ENCODE measurements at regions of chr15 and their contacts with region 1.

Region 1: DNA sequence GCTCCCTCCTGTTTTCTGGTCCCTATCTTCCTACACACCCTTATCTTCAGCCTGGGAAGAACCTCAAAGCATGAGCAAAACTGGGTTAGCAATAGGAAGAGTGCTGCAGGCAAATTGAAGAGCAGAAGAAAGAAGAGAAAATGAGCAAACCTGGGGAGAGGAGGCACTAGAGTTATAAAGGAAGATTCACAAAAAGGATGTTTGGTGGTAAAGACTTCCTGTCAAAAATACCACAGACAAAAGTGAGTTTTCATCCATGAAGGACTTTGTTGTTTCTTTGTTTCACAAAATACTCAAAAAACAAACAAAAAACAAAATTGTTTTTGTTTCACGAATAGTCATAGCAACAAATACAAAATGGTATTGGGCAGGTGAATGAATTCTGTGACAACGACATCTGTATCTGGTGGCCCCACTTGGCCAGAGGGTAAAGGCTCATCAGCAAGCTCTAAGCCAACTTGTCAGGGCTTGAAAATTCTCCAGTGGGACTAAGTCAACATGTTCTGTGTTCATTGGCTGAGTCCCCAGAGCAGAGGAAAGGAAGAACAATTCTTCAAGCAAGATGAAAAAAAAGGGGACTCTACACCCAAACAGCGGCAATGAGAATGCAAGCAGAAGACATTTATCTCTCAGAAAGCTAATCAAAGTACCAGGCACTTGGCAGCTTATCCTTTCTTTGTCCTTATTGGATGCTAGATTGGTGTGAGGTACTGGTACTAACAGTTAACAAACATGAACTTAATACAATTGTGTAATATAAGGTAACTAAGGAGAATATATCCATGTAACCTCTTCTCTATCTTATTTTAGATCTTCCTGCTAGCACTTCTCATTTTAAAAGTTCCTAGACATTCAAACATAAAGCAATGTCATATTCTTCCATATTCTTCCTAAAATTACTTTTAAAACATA is 9.7 kb downstream of the ATP8B4 start:
- DNase-seq: no peak
- H3K4me3 Mint-ChIP-seq: no peak overlapping the region
- H3K27ac Mint-ChIP-seq: peak overlapping the region; percentile 75
- H3K4me1 Mint-ChIP-seq: peaks cover 49% of the 10 kb centered on the region
- H3K27me3 Mint-ChIP-seq: peaks cover 10% of the 10 kb centered on the region

Region 2: DNA sequence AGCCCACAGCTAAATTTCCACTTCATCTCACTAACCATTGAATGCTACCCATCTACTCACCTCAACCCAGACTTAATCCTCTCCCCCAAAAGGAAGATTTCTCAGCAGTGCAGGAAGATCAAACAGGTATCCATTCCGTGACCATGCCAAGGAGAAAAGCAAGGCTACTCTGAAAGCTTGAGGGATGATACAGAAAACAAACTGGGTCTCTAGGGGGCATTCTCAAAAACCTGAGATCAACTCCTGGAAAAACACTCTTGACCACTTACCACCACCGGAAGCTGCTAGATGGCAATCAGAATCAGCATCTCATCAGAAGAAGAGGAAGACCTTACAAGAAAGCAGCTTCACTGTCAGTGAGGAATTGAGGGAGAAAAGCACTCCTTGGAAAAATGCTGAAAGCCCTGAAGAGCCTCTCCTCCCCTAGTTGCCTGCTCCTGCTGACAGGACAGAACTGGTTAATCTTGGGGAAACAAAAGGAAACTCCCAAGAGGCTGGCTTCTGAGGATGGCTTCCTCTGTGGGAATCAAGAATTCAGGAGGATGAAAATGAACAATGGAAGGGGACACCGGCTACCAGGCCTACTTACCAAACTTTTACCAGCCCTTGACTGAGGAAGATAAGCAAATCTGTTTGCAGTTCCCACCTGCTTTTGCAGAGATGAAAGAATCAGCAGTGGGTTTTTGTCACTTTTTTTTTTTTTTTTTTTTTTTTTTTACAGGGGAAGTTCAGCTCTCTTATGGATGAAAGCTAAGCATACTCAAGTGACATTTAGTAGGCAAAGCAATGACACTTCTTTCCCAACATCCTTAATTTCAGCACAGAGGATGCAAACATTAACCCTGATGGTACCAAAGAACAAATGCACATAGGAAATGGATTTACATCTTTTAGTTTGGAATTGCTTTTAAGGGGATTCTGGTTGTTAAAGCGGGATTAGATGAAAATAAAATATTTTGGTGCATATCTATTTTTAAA is 10.0 kb after region 1 on chr15 and contains the start of gene ATP8B4:
- CTCF ChIA-PET with region 1: interaction called, 10 read pairs
- DNase-seq: no peak
- H3K4me3 Mint-ChIP-seq: peak within 1 kb of the TSS; percentile 4
- H3K27ac Mint-ChIP-seq: peak within 1 kb of the TSS; percentile 6
- H3K4me1 Mint-ChIP-seq: peaks cover 15% of the 10 kb centered on the region
- H3K27me3 Mint-ChIP-seq: peaks cover 6% of the 10 kb centered on the region